Psoas muscle (tissue), 8 donors: ENCODE measurements at regions of chr22 and their contacts with region 1.

Region 1: DNA sequence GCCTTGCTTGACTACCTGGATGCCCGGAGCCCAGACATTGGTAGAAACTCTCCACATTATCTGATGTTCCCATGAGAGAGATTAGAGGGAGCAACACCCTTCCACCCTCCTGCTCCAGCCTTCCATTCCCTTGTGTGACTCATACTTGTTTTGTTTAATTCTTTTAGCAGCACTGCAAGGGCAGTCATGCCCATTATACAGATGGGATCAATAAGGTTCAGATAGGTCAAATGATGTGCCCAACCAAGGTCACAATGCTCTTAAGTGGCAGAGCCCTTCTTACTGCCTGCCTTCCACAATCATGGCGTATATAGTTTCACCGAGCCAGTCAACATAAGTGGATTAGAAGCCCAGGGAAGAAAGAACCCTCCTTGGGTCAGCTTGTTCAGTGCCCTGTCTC is 6.6 kb upstream of the CCDC134 start:
- DNase-seq: no peak
- ATAC-seq: no peak
- H3K4me3 ChIP-seq: no peak overlapping the region
- H3K27ac ChIP-seq: no peak overlapping the region
- H3K4me1 ChIP-seq: no peaks in the 10 kb centered on the region
- H3K27me3 ChIP-seq: no peaks in the 10 kb centered on the region
- CTCF ChIP-seq: no peak

Region 2: GRCh38 chr22:41636467-41636866 is 157.4 kb before region 1 on chr22:
- intact Hi-C with region 1: no loop called
- DNase-seq: peak; percentile 53 to 82
- ATAC-seq: peak; percentile 95 to 97 (median 95)
- H3K4me3 ChIP-seq: no peak overlapping the region
- H3K27ac ChIP-seq: peak overlapping the region; percentile 71
- H3K4me1 ChIP-seq: peaks cover 7% of the 10 kb centered on the region
- H3K27me3 ChIP-seq: no peaks in the 10 kb centered on the region
- CTCF ChIP-seq: no peak

Region 3: GRCh38 chr22:41752011-41752970 is 41.6 kb before region 1 on chr22:
- intact Hi-C with region 1: loop called in 1 of 2 experiments (anchors 5 kb)
- DNase-seq: no peak
- ATAC-seq: no peak
- H3K4me3 ChIP-seq: no peak overlapping the region
- H3K27ac ChIP-seq: no peak overlapping the region
- H3K4me1 ChIP-seq: no peaks in the 10 kb centered on the region
- H3K27me3 ChIP-seq: no peaks in the 10 kb centered on the region
- CTCF ChIP-seq: no peak

Region 4: DNA sequence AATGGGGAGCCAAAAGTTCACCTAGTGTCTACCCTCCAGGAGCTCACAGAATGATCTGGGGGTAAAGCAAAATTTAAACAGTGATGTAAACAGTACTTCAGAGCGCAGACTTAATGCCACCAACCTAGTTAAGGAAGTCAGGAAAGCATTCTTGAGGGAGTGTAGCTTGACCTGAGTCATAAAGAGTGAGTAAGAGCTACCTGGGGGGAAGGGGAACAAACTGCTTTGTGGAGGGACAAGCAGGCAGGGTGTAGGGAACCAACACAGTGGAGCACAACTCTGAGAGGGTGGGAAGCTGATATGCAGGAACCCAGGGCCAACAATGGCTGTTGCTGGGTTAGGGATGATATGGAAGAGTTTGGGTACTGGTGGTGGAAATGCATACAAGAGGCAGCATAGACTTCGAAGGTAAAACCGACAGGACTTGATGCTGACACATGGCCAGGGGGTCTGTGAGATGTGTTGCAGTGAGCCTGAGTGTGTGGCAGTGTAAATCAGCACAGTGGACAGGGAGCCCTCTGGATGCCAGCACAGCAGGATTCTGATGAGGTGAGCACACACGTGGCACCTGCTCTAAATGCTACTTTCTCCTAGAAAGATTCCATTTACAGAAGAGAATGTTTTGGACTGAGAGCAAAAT is 395.1 kb after region 1 on chr22:
- intact Hi-C with region 1: no loop called
- DNase-seq: no peak
- ATAC-seq: no peak
- H3K4me3 ChIP-seq: no peak overlapping the region
- H3K27ac ChIP-seq: no peak overlapping the region
- H3K4me1 ChIP-seq: peaks cover 7% of the 10 kb centered on the region
- H3K27me3 ChIP-seq: no peaks in the 10 kb centered on the region
- CTCF ChIP-seq: no peak